ENCODE measurements at regions of chr10 and their contacts with region 1.

Region 1: GRCh38 chr10:125719146-125720001 is at the start of gene EDRF1:
- DNase-seq: peak; percentile 98
- H3K4me3 ChIP-seq: peak within 1 kb of the TSS; percentile 66 to 87 (median 81)
- H3K27ac ChIP-seq: peak within 1 kb of the TSS; percentile 84
- H3K4me1 ChIP-seq: peaks cover 9% of the 10 kb centered on the region
- H3K27me3 ChIP-seq: no peaks in the 10 kb centered on the region
- CTCF ChIP-seq: no peak
- total RNA-seq, gene EDRF1: 18.2 to 23.1 TPM

Region 2: DNA sequence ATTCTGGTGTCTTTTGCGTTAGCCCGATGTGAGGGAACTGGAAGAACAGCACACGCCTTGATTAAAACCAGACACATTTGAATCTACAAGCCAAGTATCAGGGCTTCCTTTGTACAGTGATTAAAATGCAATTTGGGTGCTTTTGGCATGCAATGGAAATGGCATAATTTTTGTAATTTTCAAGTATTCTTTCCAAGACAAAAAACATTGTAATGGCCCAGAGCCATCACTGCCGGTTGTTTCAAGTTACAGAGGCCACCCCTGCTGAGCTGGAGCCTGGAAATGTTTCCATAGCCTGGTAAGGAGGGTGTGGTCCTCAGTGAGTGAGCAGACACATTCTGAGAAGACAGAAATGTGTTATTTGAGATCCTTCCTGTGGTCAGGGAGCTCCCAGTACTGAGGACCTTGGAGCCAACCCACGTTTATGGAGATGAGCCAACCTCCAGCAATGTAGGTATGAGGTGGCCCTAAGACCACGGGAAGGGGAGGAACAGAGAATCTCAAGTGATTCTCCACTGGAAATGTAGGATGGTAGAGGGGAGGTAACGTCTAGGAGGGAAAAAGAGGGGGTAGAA is 57.3 kb before region 1 on chr10:
- CTCF ChIA-PET with region 1: no interaction called
- dilution Hi-C with region 1: no loop called
- in situ Hi-C with region 1: no loop called
- intact Hi-C with region 1: loop called (anchors 2 kb)
- DNase-seq: peak; percentile 85
- H3K4me3 ChIP-seq: no peak overlapping the region
- H3K27ac ChIP-seq: peak overlapping the region; percentile 40
- H3K4me1 ChIP-seq: peaks cover 17% of the 10 kb centered on the region
- H3K27me3 ChIP-seq: no peaks in the 10 kb centered on the region
- CTCF ChIP-seq: no peak

Region 3: GRCh38 chr10:125817337-125817946 is 98.1 kb after region 1 on chr10:
- CTCF ChIA-PET with region 1: no interaction called
- dilution Hi-C with region 1: loop called (anchors 5 kb)
- in situ Hi-C with region 1: no loop called
- intact Hi-C with region 1: no loop called
- DNase-seq: no peak
- H3K4me3 ChIP-seq: no peak overlapping the region
- H3K27ac ChIP-seq: no peak overlapping the region
- H3K4me1 ChIP-seq: peaks cover 6% of the 10 kb centered on the region
- H3K27me3 ChIP-seq: no peaks in the 10 kb centered on the region
- CTCF ChIP-seq: no peak